Activated CD4-positive, alpha-beta memory T cell treated with anti-CD3 and anti-CD28 coated beads, Interleukin-2, amount 10 ng/mL, durations not matched to agents 7 days and 5 days (primary cell): ENCODE measurements at regions of chr10 and their contacts with region 1.

Region 1: GRCh38 chr10:6401562-6402348 is 178.3 kb downstream of the PRKCQ start:
- DNase-seq: peak; percentile 63
- H3K4me3 Mint-ChIP-seq: no peak overlapping the region
- H3K27ac Mint-ChIP-seq: no peak overlapping the region
- H3K4me1 Mint-ChIP-seq: peaks cover 30% of the 10 kb centered on the region
- H3K27me3 Mint-ChIP-seq: peaks cover 13% of the 10 kb centered on the region

Region 2: DNA sequence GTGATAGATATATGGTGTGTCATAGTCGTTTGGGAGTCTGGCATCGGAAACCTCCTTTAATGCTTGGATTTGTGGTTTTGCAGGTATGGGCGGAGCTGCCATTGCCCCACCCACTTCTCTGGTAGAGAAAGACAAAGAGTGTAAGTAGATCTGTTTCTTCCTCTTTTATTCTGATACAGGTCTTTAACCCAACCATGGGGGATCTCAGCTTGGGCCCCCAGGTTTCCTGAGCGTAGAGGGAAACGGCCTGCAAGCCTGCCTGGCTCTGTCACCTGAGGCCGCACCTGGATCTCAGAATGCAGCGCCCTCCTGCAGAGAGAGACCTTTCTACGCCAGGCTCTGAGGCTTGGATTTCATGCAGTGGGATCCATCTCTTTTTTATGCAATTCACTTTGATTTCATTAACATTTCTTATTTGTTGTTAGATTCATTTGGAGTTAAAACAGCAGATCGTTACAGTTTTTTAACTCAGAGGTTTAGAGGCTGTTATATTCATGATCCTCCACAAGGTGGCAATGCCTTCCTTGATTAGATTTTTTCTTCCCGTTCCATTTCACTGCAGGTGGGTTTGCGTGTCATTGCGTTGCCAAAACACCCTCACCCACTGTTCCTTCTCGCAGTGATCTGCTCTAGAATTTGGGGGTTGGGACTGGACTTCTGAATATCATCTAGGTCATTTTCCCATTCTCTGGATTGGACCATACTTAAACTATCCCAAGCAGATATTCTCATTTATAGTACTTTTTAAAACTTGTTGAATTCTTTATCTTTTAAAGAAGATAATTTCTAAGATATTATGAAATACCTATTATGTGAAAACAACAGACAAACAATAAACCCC is 292.9 kb before region 1 on chr10:
- CTCF ChIA-PET with region 1: interaction called, 48 read pairs
- POLR2A ChIA-PET with region 1: interaction called, 4 read pairs
- DNase-seq: peak; percentile 39
- H3K4me3 Mint-ChIP-seq: no peak overlapping the region
- H3K27ac Mint-ChIP-seq: peak overlapping the region; percentile 70
- H3K4me1 Mint-ChIP-seq: peaks cover 53% of the 10 kb centered on the region
- H3K27me3 Mint-ChIP-seq: no peaks in the 10 kb centered on the region

Region 3: GRCh38 chr10:6151087-6151977 is 250.4 kb before region 1 on chr10:
- CTCF ChIA-PET with region 1: interaction called, 11 read pairs
- POLR2A ChIA-PET with region 1: interaction called, 3 read pairs
- DNase-seq: peak; percentile 54
- H3K4me3 Mint-ChIP-seq: peak overlapping the region; percentile 19
- H3K27ac Mint-ChIP-seq: peak overlapping the region; percentile 51
- H3K4me1 Mint-ChIP-seq: peaks cover 47% of the 10 kb centered on the region
- H3K27me3 Mint-ChIP-seq: no peaks in the 10 kb centered on the region

Region 4: DNA sequence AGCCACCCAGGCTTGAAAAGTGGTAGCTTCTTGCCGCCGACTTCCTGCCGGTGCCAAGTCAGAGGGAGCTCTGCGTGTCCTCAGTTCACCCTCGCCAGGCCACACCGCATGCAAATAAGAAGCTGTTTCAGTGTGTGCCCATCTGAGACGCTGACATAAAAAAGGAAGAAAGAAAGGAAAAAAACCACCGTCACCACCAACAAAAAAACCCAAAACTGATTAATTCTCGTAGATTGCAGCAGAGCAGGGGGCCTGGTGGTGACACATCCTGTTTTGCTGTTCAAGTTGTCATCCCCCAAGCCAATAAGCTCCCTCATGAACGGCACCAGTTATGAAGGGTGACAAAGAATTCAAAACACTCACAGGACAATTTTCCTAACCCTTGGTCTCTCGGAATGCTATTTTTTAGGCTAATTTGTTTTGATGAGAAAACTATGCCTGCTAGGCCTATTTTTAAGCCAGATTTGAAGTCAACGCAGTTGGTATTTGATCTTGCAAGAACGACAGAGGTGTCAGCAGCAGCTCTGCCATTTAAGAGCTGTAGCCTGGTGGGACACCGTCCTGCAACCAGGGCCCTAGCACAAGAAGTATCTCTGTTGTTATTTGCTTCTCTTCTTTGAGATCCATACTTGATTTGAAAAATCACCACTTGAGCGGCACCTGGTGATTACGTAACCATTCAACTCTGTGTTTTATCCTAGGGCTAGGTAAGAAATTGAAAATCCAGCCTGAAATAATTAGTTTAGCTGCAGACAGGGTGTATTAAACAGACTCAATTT is 53.5 kb before region 1 on chr10:
- CTCF ChIA-PET with region 1: interaction called, 14 read pairs
- POLR2A ChIA-PET with region 1: interaction called, 12 read pairs
- DNase-seq: peak; percentile 87
- H3K4me3 Mint-ChIP-seq: peak overlapping the region; percentile 64
- H3K27ac Mint-ChIP-seq: peak overlapping the region; percentile 92
- H3K4me1 Mint-ChIP-seq: peaks cover 47% of the 10 kb centered on the region
- H3K27me3 Mint-ChIP-seq: peaks cover 3% of the 10 kb centered on the region

Region 5: DNA sequence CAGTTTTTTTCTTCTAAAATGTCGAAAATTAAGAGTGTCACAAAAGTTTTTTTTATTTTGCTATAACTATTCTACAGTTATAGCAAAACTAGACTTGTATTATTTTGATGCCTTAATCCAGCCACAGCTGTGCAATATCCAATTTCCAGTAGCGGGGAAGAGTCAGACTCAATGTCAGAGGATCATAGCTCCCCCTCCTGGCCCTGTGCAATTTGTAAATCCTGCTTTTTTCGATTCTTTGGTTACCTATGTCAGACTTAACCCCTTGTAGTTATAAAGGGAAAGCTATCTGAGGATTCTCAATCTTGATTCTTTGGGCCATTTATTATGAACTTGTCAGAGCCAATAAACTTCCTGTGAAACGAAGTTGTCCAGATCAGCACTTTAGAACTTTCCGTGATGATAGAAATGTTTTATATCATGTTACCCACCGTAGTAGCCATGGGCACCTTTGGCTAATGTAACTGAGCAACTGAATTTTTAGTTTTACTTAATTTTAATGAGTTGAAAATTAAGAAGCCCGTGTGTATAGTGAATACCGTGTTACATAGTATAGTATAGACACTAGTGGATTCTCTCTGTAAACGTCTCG is 266.0 kb after region 1 on chr10:
- CTCF ChIA-PET with region 1: interaction called, 15 read pairs
- POLR2A ChIA-PET with region 1: no interaction called
- DNase-seq: peak; percentile 57
- H3K4me3 Mint-ChIP-seq: no peak overlapping the region
- H3K27ac Mint-ChIP-seq: no peak overlapping the region
- H3K4me1 Mint-ChIP-seq: peaks cover 31% of the 10 kb centered on the region
- H3K27me3 Mint-ChIP-seq: peaks cover 18% of the 10 kb centered on the region